ENCODE measurements at regions of chr6 and their contacts with region 1.

Region 1: DNA sequence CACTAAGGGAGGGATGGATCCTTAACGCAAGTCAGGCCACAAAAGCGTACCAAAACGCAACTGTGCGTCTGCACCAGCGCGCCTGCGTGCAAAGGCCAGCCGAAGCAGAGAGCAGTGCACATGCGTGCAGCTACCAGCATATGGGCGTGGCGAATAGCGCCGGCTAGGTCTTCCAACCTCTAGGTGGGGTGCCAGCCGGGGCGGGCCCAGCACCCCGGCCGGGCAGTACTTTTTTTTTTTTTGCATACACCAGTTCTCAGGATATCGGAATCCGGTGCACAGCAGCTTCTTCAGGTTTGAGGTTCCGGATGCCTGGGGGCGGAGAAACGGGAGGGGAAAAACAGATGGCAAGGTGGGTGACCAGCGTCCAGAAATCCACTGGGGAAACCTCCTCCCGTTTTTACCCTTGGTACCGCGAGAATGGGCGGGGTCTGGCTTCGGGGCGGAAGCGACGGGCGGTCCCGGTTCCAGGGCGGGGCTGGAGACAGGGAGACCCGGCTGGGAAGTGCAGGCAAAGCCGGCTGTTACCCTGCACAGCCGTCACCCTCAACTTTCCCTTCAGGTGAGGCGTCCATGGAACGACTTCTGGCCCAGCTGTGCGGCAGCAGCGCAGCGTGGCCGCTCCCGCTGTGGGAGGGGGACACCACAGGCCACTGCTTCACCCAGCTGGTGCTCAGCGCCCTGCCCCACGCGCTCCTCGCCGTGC is at the start of gene ABCC10:
- DNase-seq: peak; percentile 90
- ATAC-seq: peak; percentile 93
- H3K4me3 Mint-ChIP-seq: peak within 1 kb of the TSS; percentile 95
- H3K27ac Mint-ChIP-seq: peak within 1 kb of the TSS; percentile 95
- H3K4me1 Mint-ChIP-seq: peaks cover 20% of the 10 kb centered on the region
- H3K27me3 Mint-ChIP-seq: no peaks in the 10 kb centered on the region
- CTCF ChIP-seq: no peak
- total RNA-seq, gene ABCC10: 59.5 and 74.6 TPM in 2 replicates

Region 2: GRCh38 chr6:43247113-43247999 is 180.2 kb before region 1 on chr6:
- CTCF ChIA-PET with region 1: no interaction called
- POLR2A ChIA-PET with region 1: no interaction called
- intact Hi-C with region 1: loop called (anchors 1 kb)
- DNase-seq: peak; percentile 73
- ATAC-seq: peak; percentile 96
- H3K4me3 Mint-ChIP-seq: no peak overlapping the region
- H3K27ac Mint-ChIP-seq: peak overlapping the region; percentile 76
- H3K4me1 Mint-ChIP-seq: peaks cover 29% of the 10 kb centered on the region
- H3K27me3 Mint-ChIP-seq: peaks cover 17% of the 10 kb centered on the region
- CTCF ChIP-seq: no peak

Region 3: GRCh38 chr6:43454696-43455530 is 27.4 kb after region 1 on chr6:
- CTCF ChIA-PET with region 1: no interaction called
- POLR2A ChIA-PET with region 1: interaction called, 7 read pairs
- intact Hi-C with region 1: loop called (anchors 2 kb)
- DNase-seq: peak; percentile 72
- ATAC-seq: peak; percentile 49
- H3K4me3 Mint-ChIP-seq: peak overlapping the region; percentile 85
- H3K27ac Mint-ChIP-seq: no peak overlapping the region
- H3K4me1 Mint-ChIP-seq: peaks cover 16% of the 10 kb centered on the region
- H3K27me3 Mint-ChIP-seq: no peaks in the 10 kb centered on the region
- CTCF ChIP-seq: no peak

Region 4: DNA sequence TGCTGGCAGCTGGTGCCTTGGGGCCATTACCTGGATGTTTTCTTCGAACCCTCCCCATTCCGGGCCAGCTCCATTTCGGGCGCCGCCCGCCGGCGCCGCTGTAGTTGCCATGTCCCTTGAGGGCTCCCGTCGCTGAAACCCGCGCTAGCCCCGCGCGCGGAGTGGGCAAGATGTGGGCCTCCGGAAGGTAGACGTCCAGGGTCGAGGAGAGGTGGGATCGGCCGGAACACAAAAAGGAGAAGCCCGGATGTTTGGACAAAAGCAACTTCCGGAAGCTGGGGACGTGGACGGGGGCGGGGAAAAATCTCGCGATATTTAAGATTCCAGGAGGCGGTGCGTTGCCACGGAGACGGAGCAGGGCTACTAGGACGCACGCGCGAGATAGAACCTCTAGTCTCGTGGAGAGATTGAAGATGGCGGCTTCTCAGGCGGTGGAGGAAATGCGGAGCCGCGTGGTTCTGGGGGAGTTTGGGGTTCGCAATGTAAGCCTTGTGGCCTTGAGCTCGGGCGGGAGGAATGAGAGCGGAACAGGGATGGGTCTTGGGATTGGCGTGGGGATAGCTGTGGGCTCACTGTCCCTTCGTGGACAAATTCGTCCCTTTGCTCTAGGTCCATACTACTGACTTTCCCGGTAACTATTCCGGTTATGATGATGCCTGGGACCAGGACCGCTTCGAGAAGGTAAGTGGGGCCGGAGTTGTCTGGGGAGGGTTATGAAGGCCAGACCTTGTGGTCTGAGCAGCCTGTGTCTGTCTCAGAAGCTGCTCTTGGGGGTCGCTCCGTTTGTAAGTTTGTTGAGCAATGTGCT is 89.3 kb after region 1 on chr6 and contains the starts of genes POLR1C and YIPF3:
- CTCF ChIA-PET with region 1: no interaction called
- POLR2A ChIA-PET with region 1: interaction called, 11 read pairs
- intact Hi-C with region 1: no loop called
- DNase-seq: peak; percentile 87
- ATAC-seq: peak; percentile 94
- H3K4me3 Mint-ChIP-seq: no peak within 1 kb of the TSS
- H3K27ac Mint-ChIP-seq: peak within 1 kb of the TSS; percentile 54
- H3K4me1 Mint-ChIP-seq: peaks cover 29% of the 10 kb centered on the region
- H3K27me3 Mint-ChIP-seq: no peaks in the 10 kb centered on the region
- CTCF ChIP-seq: no peak
- total RNA-seq, gene POLR1C: 67.7 and 75.6 TPM in 2 replicates
- total RNA-seq, gene YIPF3: 51.7 and 59.1 TPM in 2 replicates

Region 5: GRCh38 chr6:43575772-43576551 is 148.4 kb after region 1 on chr6 and contains the starts of genes POLH and XPO5:
- CTCF ChIA-PET with region 1: no interaction called
- POLR2A ChIA-PET with region 1: no interaction called
- intact Hi-C with region 1: loop called (anchors 2 kb)
- DNase-seq: peak; percentile 91
- ATAC-seq: peak; percentile 94
- H3K4me3 Mint-ChIP-seq: peak within 1 kb of the TSS; percentile 97
- H3K27ac Mint-ChIP-seq: peak within 1 kb of the TSS; percentile 86
- H3K4me1 Mint-ChIP-seq: peaks cover 38% of the 10 kb centered on the region
- H3K27me3 Mint-ChIP-seq: no peaks in the 10 kb centered on the region
- CTCF ChIP-seq: no peak
- total RNA-seq, gene POLH: 23.3 and 26.5 TPM in 2 replicates
- total RNA-seq, gene XPO5: 54.4 and 59.4 TPM in 2 replicates

Region 6: DNA sequence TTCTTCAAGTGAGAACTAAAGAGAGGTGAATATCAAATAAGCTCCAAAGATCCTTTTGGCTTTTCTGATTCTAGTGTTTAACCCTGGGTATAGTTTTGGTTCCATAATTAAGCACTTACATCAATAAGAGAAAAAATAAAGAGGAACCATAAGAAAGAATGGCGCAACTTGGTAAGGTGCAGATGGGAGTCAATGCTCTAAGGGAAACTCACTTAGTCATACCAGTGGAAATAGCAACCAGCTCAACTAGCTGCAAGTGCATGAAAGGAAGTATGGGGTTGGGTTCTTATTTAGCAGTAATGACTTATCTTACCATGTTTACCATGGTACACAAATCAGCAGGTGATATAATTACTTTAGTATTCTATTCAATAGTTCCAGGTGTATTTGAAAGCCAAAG is 1604.0 kb after region 1 on chr6:
- CTCF ChIA-PET with region 1: no interaction called
- POLR2A ChIA-PET with region 1: no interaction called
- intact Hi-C with region 1: no loop called
- DNase-seq: no peak
- ATAC-seq: no peak
- H3K4me3 Mint-ChIP-seq: no peak overlapping the region
- H3K27ac Mint-ChIP-seq: no peak overlapping the region
- H3K4me1 Mint-ChIP-seq: no peaks in the 10 kb centered on the region
- H3K27me3 Mint-ChIP-seq: no peaks in the 10 kb centered on the region
- CTCF ChIP-seq: no peak